Heart left ventricle (tissue), 16 donors: ENCODE measurements at regions of chr11 and their contacts with region 1.

Region 1: GRCh38 chr11:88337181-88337986 is at the start of gene CTSC:
- DNase-seq: peak; percentile 92 to 96 (median 94)
- ATAC-seq: peak; percentile 94 to 99 (median 98)
- H3K4me3 ChIP-seq: peak within 1 kb of the TSS; percentile 38 to 93 (median 68)
- H3K27ac ChIP-seq: peak within 1 kb of the TSS; percentile 4 to 98 (median 76)
- H3K4me1 ChIP-seq: peaks cover 0 to 50% (median 5%) of the 10 kb centered on the region in 12 donors
- H3K27me3 ChIP-seq: no peaks in the 10 kb centered on the region
- CTCF ChIP-seq: peak in 2 of 12 donors; percentile 6 to 20
- POLR2A ChIP-seq: peak in 1 of 2 donors; percentile 42
- total RNA-seq, gene CTSC: 11.9 to 289 (median 19.2) TPM

Region 2: GRCh38 chr11:88402192-88402715 is 64.9 kb after region 1 on chr11:
- intact Hi-C with region 1: loop called in 1 of 10 experiments (anchors 5 kb)
- DNase-seq: no peak
- ATAC-seq: peak in 2 of 4 donors; percentile 38 to 81
- H3K4me3 ChIP-seq: no peak overlapping the region
- H3K27ac ChIP-seq: peak overlapping the region in 8 of 12 donors; percentile 15 to 78 (median 28)
- H3K4me1 ChIP-seq: peaks cover 0 to 62% (median 1%) of the 10 kb centered on the region in 12 donors
- H3K27me3 ChIP-seq: no peaks in the 10 kb centered on the region
- CTCF ChIP-seq: no peak
- POLR2A ChIP-seq: no peak